ENCODE measurements at regions of chr5 and their contacts with region 1.

Region 1: GRCh38 chr5:154823605-154824004 is 26.8 kb downstream of the FAXDC2 start:
- DNase-seq: no peak
- H3K4me3 Mint-ChIP-seq: no peak overlapping the region
- H3K27ac Mint-ChIP-seq: no peak overlapping the region
- H3K4me1 Mint-ChIP-seq: peaks cover 41% of the 10 kb centered on the region
- H3K27me3 Mint-ChIP-seq: no peaks in the 10 kb centered on the region

Region 2: GRCh38 chr5:154696891-154697290 is 126.7 kb before region 1 on chr5:
- CTCF ChIA-PET with region 1: no interaction called
- POLR2A ChIA-PET with region 1: interaction called, 10 read pairs
- DNase-seq: no peak
- H3K4me3 Mint-ChIP-seq: no peak overlapping the region
- H3K27ac Mint-ChIP-seq: no peak overlapping the region
- H3K4me1 Mint-ChIP-seq: no peaks in the 10 kb centered on the region
- H3K27me3 Mint-ChIP-seq: peaks cover 6% of the 10 kb centered on the region

Region 3: DNA sequence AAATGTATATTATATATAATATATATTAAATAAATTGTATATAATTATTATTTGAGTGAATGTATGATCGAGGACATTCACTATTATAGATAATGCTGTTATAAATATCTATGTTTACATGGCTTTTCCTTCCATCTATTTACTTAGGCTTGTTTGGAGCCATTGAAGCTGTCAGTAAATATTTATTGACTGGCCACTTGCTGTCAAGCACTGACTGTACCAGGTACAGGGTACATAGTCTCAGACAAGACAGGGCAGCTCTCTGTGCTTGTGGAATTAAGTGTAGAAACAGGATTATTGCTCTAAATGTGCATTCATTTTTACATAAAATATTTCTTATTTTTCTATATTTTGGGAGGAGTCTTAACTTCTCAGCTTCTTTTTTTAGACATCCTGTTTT is 10.4 kb after region 1 on chr5:
- CTCF ChIA-PET with region 1: interaction called, 14 read pairs
- POLR2A ChIA-PET with region 1: no interaction called
- DNase-seq: no peak
- H3K4me3 Mint-ChIP-seq: no peak overlapping the region
- H3K27ac Mint-ChIP-seq: no peak overlapping the region
- H3K4me1 Mint-ChIP-seq: peaks cover 30% of the 10 kb centered on the region
- H3K27me3 Mint-ChIP-seq: no peaks in the 10 kb centered on the region

Measured in activated CD4-positive, alpha-beta T cell treated with anti-CD3 and anti-CD28 coated beads, Interleukin-2, amount 10 ng/mL, durations not matched to agents 7 days and 5 days (primary cell).